ENCODE measurements at regions of chr16 and their contacts with region 1.

Region 1: DNA sequence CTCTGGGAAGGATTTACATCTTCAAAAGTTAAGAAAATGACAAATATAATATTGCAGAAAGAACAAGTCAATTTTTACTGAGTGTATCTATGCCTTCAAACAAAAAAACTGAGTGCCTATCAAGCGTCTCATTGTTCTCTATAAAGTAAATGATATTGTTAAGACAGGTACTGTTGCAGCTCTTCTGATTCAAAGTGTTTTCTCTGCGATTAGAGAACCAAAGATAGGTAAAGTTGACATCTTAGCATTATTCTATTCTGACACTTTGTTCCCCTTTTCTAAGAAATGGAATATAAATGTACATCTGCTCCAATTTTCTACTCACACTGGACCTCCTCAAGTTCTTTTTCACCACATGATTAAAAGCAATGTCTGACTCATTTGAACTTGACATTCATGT is 1317.7 kb downstream of the CDH11 start:
- DNase-seq: no peak

Region 2: GRCh38 chr16:62568926-62569325 is 1235.2 kb before region 1 on chr16:
- intact Hi-C with region 1: no loop called
- DNase-seq: no peak

Region 3: DNA sequence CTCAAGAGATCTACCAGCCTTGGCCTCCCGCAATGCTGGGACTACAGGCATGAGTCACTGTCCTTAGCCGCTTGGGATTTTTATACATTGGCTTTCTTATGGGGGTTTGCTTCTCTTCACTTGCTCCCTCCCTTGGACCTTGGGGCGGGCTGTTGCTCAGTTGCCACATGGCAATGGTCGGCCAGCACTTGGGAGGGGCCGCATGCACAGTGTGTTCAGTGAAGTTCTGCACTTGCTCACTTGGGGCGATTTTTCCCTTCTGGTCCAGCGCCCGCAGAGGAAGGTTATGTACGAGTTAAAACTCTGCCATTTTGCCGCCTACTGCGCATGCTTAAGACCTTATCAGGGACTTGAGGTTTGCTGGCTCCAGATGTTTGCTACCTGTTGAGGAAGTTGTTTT is 400.3 kb before region 1 on chr16:
- intact Hi-C with region 1: loop called in 1 of 2 experiments (anchors 5 kb)
- DNase-seq: no peak

Region 4: DNA sequence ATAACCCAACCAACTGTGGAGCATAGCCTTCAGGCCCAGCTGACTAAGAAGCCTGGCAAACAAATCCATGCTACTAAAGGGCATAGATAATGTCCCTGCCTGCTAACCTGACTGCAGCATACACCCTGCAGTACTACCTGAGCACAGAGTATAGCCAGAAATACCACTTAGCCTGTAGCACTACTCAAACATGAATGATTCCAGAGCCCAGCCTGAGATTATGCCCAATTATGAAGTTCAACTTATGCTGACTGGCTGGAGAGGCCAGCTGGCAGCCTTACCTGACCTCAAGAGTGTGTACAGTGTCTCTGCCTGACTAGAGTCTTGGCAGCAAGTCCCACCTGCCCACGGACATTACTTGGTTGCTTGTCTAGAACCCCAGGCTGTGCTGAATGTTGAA is 52.4 kb after region 1 on chr16:
- intact Hi-C with region 1: no loop called
- DNase-seq: no peak

Measured in posterior vena cava (tissue), 2 donors.